Ovary (tissue), 10 donors: ENCODE measurements at regions of chr19 and their contacts with region 1.

Region 1: GRCh38 chr19:4870025-4870700 is 2.7 kb upstream of the PLIN3 start:
- DNase-seq: peak; percentile 59 to 75 (median 62)
- H3K4me3 ChIP-seq: no peak overlapping the region
- H3K27ac ChIP-seq: no peak overlapping the region
- H3K4me1 ChIP-seq: peaks cover 6% of the 10 kb centered on the region
- H3K27me3 ChIP-seq: no peaks in the 10 kb centered on the region
- CTCF ChIP-seq: no peak
- EP300 ChIP-seq: no peak
- POLR2A ChIP-seq: no peak

Region 2: DNA sequence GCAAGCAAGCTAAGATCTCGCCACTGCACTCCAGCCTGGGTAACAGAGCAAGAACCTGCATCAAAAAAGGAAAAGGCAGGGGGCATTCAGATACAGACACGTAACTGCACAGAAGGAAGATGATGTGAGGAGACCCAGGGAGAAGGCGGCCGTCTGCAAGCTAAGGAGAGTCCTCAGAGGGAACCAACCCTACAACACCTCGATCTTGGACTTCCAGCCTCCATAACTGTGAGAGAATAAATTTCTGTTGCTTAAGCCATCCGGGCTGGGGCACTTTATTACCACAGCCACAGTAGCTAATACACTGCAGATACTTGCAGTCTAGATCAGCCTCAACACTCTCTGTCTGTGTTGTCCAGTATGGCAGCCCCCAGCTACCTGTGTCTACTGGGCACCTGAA is 46.6 kb before region 1 on chr19:
- intact Hi-C with region 1: no loop called
- DNase-seq: no peak
- H3K4me3 ChIP-seq: no peak overlapping the region
- H3K27ac ChIP-seq: no peak overlapping the region
- H3K4me1 ChIP-seq: no peaks in the 10 kb centered on the region
- H3K27me3 ChIP-seq: no peaks in the 10 kb centered on the region
- CTCF ChIP-seq: no peak
- EP300 ChIP-seq: no peak
- POLR2A ChIP-seq: no peak

Region 3: GRCh38 chr19:4909897-4910593 is 39.9 kb after region 1 on chr19:
- intact Hi-C with region 1: loop called in 1 of 4 experiments (anchors 2 kb)
- DNase-seq: peak; percentile 86 to 95 (median 90)
- H3K4me3 ChIP-seq: peak overlapping the region; percentile 68
- H3K27ac ChIP-seq: no peak overlapping the region
- H3K4me1 ChIP-seq: peaks cover 5% of the 10 kb centered on the region
- H3K27me3 ChIP-seq: no peaks in the 10 kb centered on the region
- CTCF ChIP-seq: no peak
- EP300 ChIP-seq: no peak
- POLR2A ChIP-seq: no peak